ENCODE measurements at regions of chrX and their contacts with region 1.

Region 1: GRCh38 chrX:16914058-16914457 is 32.4 kb upstream of the REPS2 start:
- DNase-seq: no peak
- ATAC-seq: no peak
- H3K4me3 ChIP-seq: no peak overlapping the region
- H3K4me3 Mint-ChIP-seq: no peak overlapping the region
- H3K27ac ChIP-seq: no peak overlapping the region
- H3K27ac Mint-ChIP-seq: no peak overlapping the region
- H3K4me1 ChIP-seq: no peaks in the 10 kb centered on the region
- H3K4me1 Mint-ChIP-seq: no peaks in the 10 kb centered on the region
- H3K27me3 ChIP-seq: no peaks in the 10 kb centered on the region
- H3K27me3 Mint-ChIP-seq: no peaks in the 10 kb centered on the region
- CTCF ChIP-seq: no peak

Region 2: GRCh38 chrX:15864629-15865028 is 1049.4 kb before region 1 on chrX:
- CTCF ChIA-PET with region 1: no interaction called
- POLR2A ChIA-PET with region 1: interaction called, 10 read pairs
- intact Hi-C with region 1: no loop called
- DNase-seq: no peak
- ATAC-seq: no peak
- H3K4me3 ChIP-seq: no peak overlapping the region
- H3K4me3 Mint-ChIP-seq: no peak overlapping the region
- H3K27ac ChIP-seq: no peak overlapping the region
- H3K27ac Mint-ChIP-seq: no peak overlapping the region
- H3K4me1 ChIP-seq: peaks cover 3 to 5% of the 10 kb centered on the region in 2 donors
- H3K4me1 Mint-ChIP-seq: no peaks in the 10 kb centered on the region
- H3K27me3 ChIP-seq: no peaks in the 10 kb centered on the region
- H3K27me3 Mint-ChIP-seq: no peaks in the 10 kb centered on the region
- CTCF ChIP-seq: no peak